Adrenal gland (tissue), 19 donors: ENCODE measurements at regions of chr19 and their contacts with region 1.

Region 1: DNA sequence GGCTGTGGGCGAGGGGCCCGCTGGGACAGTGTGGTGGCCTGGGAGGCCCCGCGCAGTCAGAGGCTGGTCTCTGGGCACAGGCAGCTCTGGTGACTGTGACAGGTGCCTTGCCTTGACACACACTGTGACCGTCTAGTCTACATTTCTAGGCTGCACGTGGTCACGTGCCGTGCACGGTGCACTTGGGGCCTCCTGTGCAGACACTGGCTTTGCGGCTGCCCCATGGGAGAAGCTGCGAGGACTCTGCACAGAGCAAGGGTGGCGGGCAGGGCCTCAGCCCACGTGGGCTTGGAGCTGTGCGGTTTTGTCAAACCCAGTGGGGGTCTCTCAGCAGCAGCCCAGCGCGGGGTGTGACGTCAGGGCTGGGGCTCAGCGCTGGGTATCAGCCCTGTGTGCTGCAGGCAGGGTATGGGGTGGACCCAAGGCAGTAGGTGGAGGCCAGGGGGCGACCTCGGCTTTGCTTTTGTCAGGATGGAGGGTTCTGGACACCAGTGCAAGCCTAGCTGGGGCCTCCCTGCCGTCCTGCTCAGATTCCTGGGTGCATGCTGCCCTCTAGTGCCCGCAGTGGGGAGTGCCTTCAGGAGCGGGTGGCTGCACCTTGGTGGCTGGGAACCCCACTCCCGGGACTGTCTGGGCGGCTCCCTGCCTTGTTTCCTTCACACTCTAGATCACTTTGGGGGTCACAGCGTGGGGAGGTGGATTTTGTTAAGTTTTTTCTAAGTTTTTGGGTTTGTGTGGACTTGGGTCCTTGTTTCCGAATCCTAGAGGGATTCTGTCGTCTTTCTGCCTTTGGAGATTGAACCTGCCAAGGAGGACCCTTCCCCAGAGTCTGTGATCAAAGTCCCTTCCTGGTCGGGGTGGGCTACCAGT is 62.6 kb downstream of the KDM4B start:
- DNase-seq: peak; percentile 83 to 93 (median 88)
- H3K4me3 ChIP-seq: no peak overlapping the region
- H3K27ac ChIP-seq: peak overlapping the region in 3 of 5 donors; percentile 31 to 78 (median 70)
- H3K4me1 ChIP-seq: peaks cover 19 to 46% of the 10 kb centered on the region in 2 donors
- H3K27me3 ChIP-seq: no peaks in the 10 kb centered on the region
- CTCF ChIP-seq: peak; percentile 86 to 98 (median 95)
- POLR2A ChIP-seq: no peak

Region 2: DNA sequence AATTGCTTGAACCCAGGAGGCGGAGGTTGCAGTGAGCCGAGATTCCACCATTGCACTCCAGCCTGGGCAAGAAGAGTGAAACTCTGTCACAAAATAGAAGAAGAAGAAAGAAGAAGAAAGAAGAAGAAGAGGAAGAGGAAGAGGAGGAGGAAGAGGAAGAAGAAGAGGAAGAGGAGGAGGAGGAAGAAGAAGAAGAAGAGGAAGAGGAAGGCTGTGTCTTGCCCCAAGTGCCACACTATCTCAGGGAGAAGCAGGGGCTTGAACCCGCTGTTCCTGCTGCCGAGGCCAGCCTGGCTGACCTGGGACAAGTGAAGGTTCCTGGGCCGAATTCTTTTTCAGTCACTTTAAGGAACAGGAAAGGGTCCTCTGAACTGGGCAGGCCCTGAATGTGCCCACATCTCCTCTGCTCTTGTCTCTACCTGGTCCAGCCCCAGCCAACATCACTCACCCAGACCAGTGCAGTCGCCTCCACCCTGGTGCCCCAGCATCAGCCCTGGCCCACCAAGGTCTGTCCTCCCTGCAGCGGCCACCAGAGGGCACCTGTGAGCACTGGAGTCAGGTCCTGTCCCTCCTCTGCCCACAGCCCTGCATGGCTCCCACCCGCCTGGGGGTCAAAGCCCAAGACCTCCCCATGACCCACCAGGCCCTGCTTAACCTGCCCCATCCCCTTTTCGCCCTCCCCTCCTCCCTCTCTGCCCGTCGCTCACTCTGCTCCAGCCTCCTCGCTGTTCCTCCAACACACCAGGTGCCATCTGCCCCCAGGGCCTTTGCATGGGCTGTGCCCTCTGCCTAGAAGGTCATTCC is 219.9 kb before region 1 on chr19:
- intact Hi-C with region 1: loop called in 1 of 2 experiments (anchors 5 kb)
- DNase-seq: peak; percentile 77 to 93 (median 86)
- H3K4me3 ChIP-seq: no peak overlapping the region
- H3K27ac ChIP-seq: peak overlapping the region in 1 of 5 donors; percentile 31
- H3K4me1 ChIP-seq: peaks cover 6 to 11% of the 10 kb centered on the region in 2 donors
- H3K27me3 ChIP-seq: no peaks in the 10 kb centered on the region
- CTCF ChIP-seq: peak; percentile 79 to 89 (median 82)
- POLR2A ChIP-seq: no peak

Region 3: DNA sequence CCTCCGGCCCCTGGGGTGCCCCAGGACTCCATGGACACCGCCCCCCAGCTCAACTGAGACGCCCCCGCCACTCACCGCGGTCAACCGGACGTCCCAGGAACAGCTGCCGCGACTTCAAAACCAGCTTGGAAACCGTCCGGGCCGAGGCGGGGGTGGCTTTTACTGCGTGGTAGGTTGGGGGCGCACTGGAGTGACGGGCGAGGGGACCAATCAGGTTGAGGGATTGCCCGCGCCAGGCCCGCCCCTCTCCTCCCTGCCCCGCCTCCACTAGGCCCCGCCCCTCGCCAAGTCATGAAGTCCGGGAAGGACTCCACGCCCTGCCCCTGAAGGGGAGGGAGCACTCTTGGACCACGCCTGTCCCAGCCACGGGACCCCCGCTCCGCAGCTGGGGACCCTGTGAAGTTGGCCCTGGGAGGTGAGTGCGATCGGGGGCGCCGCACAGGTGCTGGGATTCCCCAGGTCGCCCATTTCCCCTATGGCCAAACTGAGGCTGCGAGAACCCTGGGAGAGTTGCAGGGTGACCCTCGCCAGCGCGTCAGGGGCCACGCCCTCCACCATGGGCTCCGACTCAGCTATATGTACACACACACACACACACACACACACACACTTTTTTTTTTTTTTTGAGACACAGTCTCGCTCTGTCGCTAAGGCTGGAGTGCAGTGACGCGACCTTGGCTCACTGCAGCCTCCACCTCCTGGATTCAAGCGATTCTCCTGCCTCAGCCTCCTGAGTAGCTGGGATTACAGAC is 163.8 kb before region 1 on chr19 and contains the start of gene PLIN3:
- intact Hi-C with region 1: loop called (anchors 5 kb)
- DNase-seq: peak; percentile 97 to 99 (median 98)
- H3K4me3 ChIP-seq: peak within 1 kb of the TSS in 3 of 4 donors; percentile 27 to 66 (median 63)
- H3K27ac ChIP-seq: peak within 1 kb of the TSS; percentile 21 to 91 (median 82)
- H3K4me1 ChIP-seq: peaks cover 9 to 32% of the 10 kb centered on the region in 2 donors
- H3K27me3 ChIP-seq: no peaks in the 10 kb centered on the region
- CTCF ChIP-seq: no peak
- POLR2A ChIP-seq: peak; percentile 24 to 90
- total RNA-seq, gene PLIN3: 64.9 to 181 (median 115) TPM

Region 4: GRCh38 chr19:4909897-4910593 is 121.4 kb before region 1 on chr19:
- intact Hi-C with region 1: loop called in 1 of 2 experiments (anchors 5 kb)
- DNase-seq: peak; percentile 88 to 94 (median 91)
- H3K4me3 ChIP-seq: peak overlapping the region in 3 of 4 donors; percentile 25 to 98 (median 35)
- H3K27ac ChIP-seq: no peak overlapping the region
- H3K4me1 ChIP-seq: peaks cover 12 to 23% of the 10 kb centered on the region in 2 donors
- H3K27me3 ChIP-seq: peaks cover 10% of the 10 kb centered on the region
- CTCF ChIP-seq: no peak
- POLR2A ChIP-seq: no peak

Region 5: GRCh38 chr19:4969772-4970531 is 61.5 kb before region 1 on chr19:
- intact Hi-C with region 1: loop called (anchors 5 to 10 kb)
- DNase-seq: peak in 6 of 7 donors; percentile 30 to 57 (median 48)
- H3K4me3 ChIP-seq: peak overlapping the region in 3 of 4 donors; percentile 14 to 79 (median 51)
- H3K27ac ChIP-seq: peak overlapping the region; percentile 61 to 93 (median 84)
- H3K4me1 ChIP-seq: peaks cover 34 to 51% of the 10 kb centered on the region in 2 donors
- H3K27me3 ChIP-seq: no peaks in the 10 kb centered on the region
- CTCF ChIP-seq: no peak
- POLR2A ChIP-seq: no peak

Region 6: GRCh38 chr19:4976401-4977298 is 54.8 kb before region 1 on chr19:
- intact Hi-C with region 1: loop called (anchors 5 to 10 kb)
- DNase-seq: peak; percentile 81 to 96 (median 93)
- H3K4me3 ChIP-seq: no peak overlapping the region
- H3K27ac ChIP-seq: peak overlapping the region; percentile 78 to 91 (median 86)
- H3K4me1 ChIP-seq: peaks cover 39 to 77% of the 10 kb centered on the region in 2 donors
- H3K27me3 ChIP-seq: no peaks in the 10 kb centered on the region
- CTCF ChIP-seq: peak; percentile 35 to 62 (median 52)
- POLR2A ChIP-seq: peak; percentile 48 to 84